ENCODE measurements at regions of chr11 and their contacts with region 1.

Region 1: GRCh38 chr11:82900277-82901164 is at the start of gene PRCP:
- DNase-seq: peak; percentile 91 to 95 (median 91)
- H3K4me3 ChIP-seq: peak within 1 kb of the TSS; percentile 90
- H3K4me3 Mint-ChIP-seq: peak within 1 kb of the TSS; percentile 89 to 100 (median 97)
- H3K27ac ChIP-seq: peak within 1 kb of the TSS; percentile 96
- H3K27ac Mint-ChIP-seq: peak within 1 kb of the TSS; percentile 98 to 100 (median 100)
- H3K4me1 ChIP-seq: peaks cover 18% of the 10 kb centered on the region
- H3K4me1 Mint-ChIP-seq: peaks cover 41 to 54% (median 54%) of the 10 kb centered on the region in 3 donors
- H3K27me3 ChIP-seq: no peaks in the 10 kb centered on the region
- H3K27me3 Mint-ChIP-seq: no peaks in the 10 kb centered on the region
- total RNA-seq, gene PRCP: 26.5 to 27.1 TPM

Region 2: GRCh38 chr11:82867495-82868082 is 32.9 kb before region 1 on chr11:
- CTCF ChIA-PET with region 1: interaction called, 31 read pairs
- POLR2A ChIA-PET with region 1: interaction called, 3 read pairs
- DNase-seq: peak; percentile 61 to 75 (median 66)
- H3K4me3 ChIP-seq: no peak overlapping the region
- H3K4me3 Mint-ChIP-seq: peak overlapping the region in 5 of 7 donors; percentile 41 to 59 (median 49)
- H3K27ac ChIP-seq: no peak overlapping the region
- H3K27ac Mint-ChIP-seq: peak overlapping the region in 4 of 8 donors; percentile 17 to 66 (median 60)
- H3K4me1 ChIP-seq: no peaks in the 10 kb centered on the region
- H3K4me1 Mint-ChIP-seq: peaks cover 9 to 14% (median 14%) of the 10 kb centered on the region in 3 donors
- H3K27me3 ChIP-seq: no peaks in the 10 kb centered on the region
- H3K27me3 Mint-ChIP-seq: peaks cover 0 to 3% of the 10 kb centered on the region in 2 donors

Region 3: DNA sequence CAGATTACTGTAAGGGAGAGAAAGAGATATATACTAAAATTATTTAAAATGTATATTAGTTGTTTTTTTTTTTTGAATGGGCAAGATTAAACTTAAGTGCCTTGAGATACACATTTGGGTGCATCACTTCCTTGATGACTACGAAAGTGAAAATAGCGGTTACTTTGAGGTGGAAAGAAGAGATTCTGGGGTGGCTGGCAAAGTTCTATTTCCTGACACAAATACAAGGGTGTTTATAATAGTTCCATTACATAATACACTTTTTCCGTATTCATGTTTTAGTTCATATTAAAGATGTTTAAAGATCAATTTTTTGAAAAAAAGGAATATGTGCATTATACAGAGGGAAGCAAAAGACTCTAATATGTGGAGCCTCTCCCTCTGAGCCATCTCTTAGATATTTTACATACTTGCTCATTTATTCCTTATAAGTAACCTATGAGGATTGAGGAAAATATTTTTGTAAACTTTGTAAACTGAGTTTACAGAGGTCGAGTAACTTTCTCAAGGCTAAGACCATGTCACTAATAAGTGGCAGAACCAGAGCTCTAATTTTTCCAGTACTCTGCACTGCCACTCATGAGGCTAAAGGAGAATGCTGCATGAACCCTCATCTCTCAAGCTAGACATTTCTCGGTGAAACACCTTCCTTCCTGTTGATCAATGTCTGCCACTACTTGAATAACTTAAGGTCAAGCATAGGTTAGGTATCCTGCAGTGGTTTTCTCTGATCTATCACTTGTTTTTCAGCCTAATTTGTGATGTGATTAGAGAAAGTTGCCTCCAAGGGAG is 59.7 kb after region 1 on chr11:
- CTCF ChIA-PET with region 1: interaction called, 8 read pairs
- POLR2A ChIA-PET with region 1: interaction called, 17 read pairs
- DNase-seq: peak in 4 of 5 donors; percentile 21 to 85 (median 74)
- H3K4me3 ChIP-seq: peak overlapping the region; percentile 49
- H3K4me3 Mint-ChIP-seq: peak overlapping the region; percentile 55 to 81 (median 78)
- H3K27ac ChIP-seq: peak overlapping the region; percentile 70
- H3K27ac Mint-ChIP-seq: peak overlapping the region; percentile 90 to 98 (median 96)
- H3K4me1 ChIP-seq: peaks cover 80% of the 10 kb centered on the region
- H3K4me1 Mint-ChIP-seq: peaks cover 68 to 93% (median 91%) of the 10 kb centered on the region in 3 donors
- H3K27me3 ChIP-seq: no peaks in the 10 kb centered on the region
- H3K27me3 Mint-ChIP-seq: no peaks in the 10 kb centered on the region

Region 4: GRCh38 chr11:82980292-82980691 is 79.8 kb after region 1 on chr11:
- CTCF ChIA-PET with region 1: no interaction called
- POLR2A ChIA-PET with region 1: no interaction called
- DNase-seq: no peak
- H3K4me3 ChIP-seq: no peak overlapping the region
- H3K4me3 Mint-ChIP-seq: no peak overlapping the region
- H3K27ac ChIP-seq: no peak overlapping the region
- H3K27ac Mint-ChIP-seq: peak overlapping the region in 1 of 8 donors; percentile 23
- H3K4me1 ChIP-seq: no peaks in the 10 kb centered on the region
- H3K4me1 Mint-ChIP-seq: peaks cover 10 to 28% (median 13%) of the 10 kb centered on the region in 3 donors
- H3K27me3 ChIP-seq: no peaks in the 10 kb centered on the region
- H3K27me3 Mint-ChIP-seq: no peaks in the 10 kb centered on the region

Region 5: GRCh38 chr11:83071567-83072349 is 171.2 kb after region 1 on chr11 and contains the start of gene RAB30:
- CTCF ChIA-PET with region 1: interaction called, 7 read pairs
- POLR2A ChIA-PET with region 1: interaction called, 13 read pairs
- DNase-seq: peak; percentile 88 to 97 (median 93)
- H3K4me3 ChIP-seq: peak within 1 kb of the TSS; percentile 82
- H3K4me3 Mint-ChIP-seq: no peak within 1 kb of the TSS
- H3K27ac ChIP-seq: peak within 1 kb of the TSS; percentile 91
- H3K27ac Mint-ChIP-seq: no peak within 1 kb of the TSS
- H3K4me1 ChIP-seq: peaks cover 40% of the 10 kb centered on the region
- H3K4me1 Mint-ChIP-seq: peaks cover 0 to 33% (median 19%) of the 10 kb centered on the region in 3 donors
- H3K27me3 ChIP-seq: no peaks in the 10 kb centered on the region
- H3K27me3 Mint-ChIP-seq: no peaks in the 10 kb centered on the region
- total RNA-seq, gene RAB30: 15.7 to 17.1 TPM

Region 6: DNA sequence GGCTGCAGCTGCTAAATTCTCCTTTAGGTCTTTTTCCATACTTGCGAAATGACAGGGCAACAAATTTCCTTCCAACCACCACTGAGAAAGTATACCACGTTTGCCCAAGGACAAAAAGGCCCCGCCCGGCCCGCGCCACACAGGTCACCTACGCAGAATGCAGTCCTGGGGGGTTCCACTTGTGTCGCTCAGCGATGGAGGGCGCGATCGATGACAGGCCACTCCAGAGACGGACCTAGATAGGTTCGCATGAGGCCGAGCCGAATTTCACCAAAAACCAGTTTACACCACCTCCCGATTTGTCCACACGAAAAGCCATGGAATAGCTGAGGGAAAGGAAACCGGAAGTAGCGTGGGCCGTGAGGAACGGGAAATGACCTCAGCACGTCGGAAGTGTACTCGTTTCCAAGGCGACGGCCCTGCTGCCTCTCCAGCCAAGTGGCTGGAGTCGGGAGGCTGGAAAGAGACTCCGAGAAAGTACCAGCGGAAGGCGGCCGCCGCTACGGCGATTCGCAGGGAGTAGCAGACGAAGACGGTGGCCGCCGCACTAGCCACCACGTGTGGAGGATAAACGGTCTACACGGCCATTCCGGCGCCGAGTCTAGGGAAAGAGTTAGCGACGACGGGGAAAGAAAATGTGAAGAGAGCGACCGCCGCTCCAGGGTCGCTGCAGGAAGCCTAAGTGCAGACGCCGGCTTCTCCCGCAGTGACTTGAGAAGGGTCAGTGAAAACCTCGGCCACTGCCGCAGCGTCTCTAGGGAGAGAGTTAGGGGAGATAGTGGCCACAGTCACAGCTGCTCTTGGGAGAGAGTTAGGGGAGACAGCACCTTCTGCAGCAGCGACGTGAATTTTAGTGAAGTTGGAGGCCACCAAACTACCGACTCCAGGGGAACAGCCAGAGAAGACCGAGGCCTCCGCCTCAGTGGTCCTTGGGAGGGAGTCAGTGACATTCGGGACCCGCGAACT is 293.1 kb after region 1 on chr11 and contains the start of gene ANKRD42:
- CTCF ChIA-PET with region 1: interaction called, 7 read pairs
- POLR2A ChIA-PET with region 1: interaction called, 10 read pairs
- DNase-seq: peak; percentile 79 to 92 (median 89)
- H3K4me3 ChIP-seq: peak within 1 kb of the TSS; percentile 96
- H3K4me3 Mint-ChIP-seq: peak within 1 kb of the TSS; percentile 98 to 100 (median 99)
- H3K27ac ChIP-seq: peak within 1 kb of the TSS; percentile 99
- H3K27ac Mint-ChIP-seq: peak within 1 kb of the TSS; percentile 98 to 100 (median 100)
- H3K4me1 ChIP-seq: peaks cover 34% of the 10 kb centered on the region
- H3K4me1 Mint-ChIP-seq: peaks cover 50 to 65% (median 59%) of the 10 kb centered on the region in 3 donors
- H3K27me3 ChIP-seq: no peaks in the 10 kb centered on the region
- H3K27me3 Mint-ChIP-seq: peaks cover 0 to 3% of the 10 kb centered on the region in 2 donors
- total RNA-seq, gene ANKRD42: 9.7 to 10.3 TPM

Region 7: GRCh38 chr11:83249972-83250593 is 349.6 kb after region 1 on chr11:
- CTCF ChIA-PET with region 1: interaction called, 25 read pairs
- POLR2A ChIA-PET with region 1: no interaction called
- DNase-seq: peak in 2 of 5 donors; percentile 9 to 40
- H3K4me3 ChIP-seq: no peak overlapping the region
- H3K4me3 Mint-ChIP-seq: no peak overlapping the region
- H3K27ac ChIP-seq: no peak overlapping the region
- H3K27ac Mint-ChIP-seq: no peak overlapping the region
- H3K4me1 ChIP-seq: no peaks in the 10 kb centered on the region
- H3K4me1 Mint-ChIP-seq: peaks cover 6 to 10% (median 7%) of the 10 kb centered on the region in 3 donors
- H3K27me3 ChIP-seq: no peaks in the 10 kb centered on the region
- H3K27me3 Mint-ChIP-seq: no peaks in the 10 kb centered on the region

Region 8: GRCh38 chr11:83285771-83286528 is 385.4 kb after region 1 on chr11 and contains the start of gene CCDC90B:
- CTCF ChIA-PET with region 1: no interaction called
- POLR2A ChIA-PET with region 1: interaction called, 20 read pairs
- DNase-seq: peak; percentile 87 to 98 (median 95)
- H3K4me3 ChIP-seq: peak within 1 kb of the TSS; percentile 84
- H3K4me3 Mint-ChIP-seq: peak within 1 kb of the TSS; percentile 97 to 99 (median 98)
- H3K27ac ChIP-seq: peak within 1 kb of the TSS; percentile 93
- H3K27ac Mint-ChIP-seq: peak within 1 kb of the TSS; percentile 97 to 100 (median 100)
- H3K4me1 ChIP-seq: peaks cover 25% of the 10 kb centered on the region
- H3K4me1 Mint-ChIP-seq: peaks cover 40 to 55% (median 42%) of the 10 kb centered on the region in 3 donors
- H3K27me3 ChIP-seq: no peaks in the 10 kb centered on the region
- H3K27me3 Mint-ChIP-seq: peaks cover 3 to 6% of the 10 kb centered on the region in 2 donors
- total RNA-seq, gene CCDC90B: 36.7 to 40.6 TPM